Activated B cell treated with CpG ODN at 0.5 μM for 24 hours (primary cell): ENCODE measurements at regions of chr3 and their contacts with region 1.

Region 1: DNA sequence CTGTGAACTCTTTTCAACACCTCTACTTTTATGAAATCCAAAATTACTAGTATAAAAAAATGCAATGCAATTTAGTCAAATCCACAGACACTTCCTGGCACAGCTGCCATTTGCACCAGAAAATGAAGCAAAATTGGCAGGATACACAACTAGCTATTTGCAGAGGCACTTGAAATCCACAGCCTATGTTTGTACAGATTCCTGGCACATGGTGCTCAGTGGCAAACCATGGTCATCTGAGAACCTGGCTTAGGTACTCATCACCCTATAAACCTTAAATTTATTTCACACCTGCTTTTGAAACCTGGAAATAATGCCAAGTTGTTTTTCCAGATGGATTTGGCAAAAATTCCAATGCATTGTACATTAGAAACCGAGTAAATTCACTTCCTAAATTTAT is 20.2 kb upstream of the PPM1L start:
- DNase-seq: no peak
- ATAC-seq: no peak
- H3K4me3 Mint-ChIP-seq: no peak overlapping the region
- H3K27ac Mint-ChIP-seq: no peak overlapping the region
- H3K4me1 Mint-ChIP-seq: no peaks in the 10 kb centered on the region
- H3K27me3 Mint-ChIP-seq: peaks cover 3% of the 10 kb centered on the region
- CTCF ChIP-seq: no peak

Region 2: DNA sequence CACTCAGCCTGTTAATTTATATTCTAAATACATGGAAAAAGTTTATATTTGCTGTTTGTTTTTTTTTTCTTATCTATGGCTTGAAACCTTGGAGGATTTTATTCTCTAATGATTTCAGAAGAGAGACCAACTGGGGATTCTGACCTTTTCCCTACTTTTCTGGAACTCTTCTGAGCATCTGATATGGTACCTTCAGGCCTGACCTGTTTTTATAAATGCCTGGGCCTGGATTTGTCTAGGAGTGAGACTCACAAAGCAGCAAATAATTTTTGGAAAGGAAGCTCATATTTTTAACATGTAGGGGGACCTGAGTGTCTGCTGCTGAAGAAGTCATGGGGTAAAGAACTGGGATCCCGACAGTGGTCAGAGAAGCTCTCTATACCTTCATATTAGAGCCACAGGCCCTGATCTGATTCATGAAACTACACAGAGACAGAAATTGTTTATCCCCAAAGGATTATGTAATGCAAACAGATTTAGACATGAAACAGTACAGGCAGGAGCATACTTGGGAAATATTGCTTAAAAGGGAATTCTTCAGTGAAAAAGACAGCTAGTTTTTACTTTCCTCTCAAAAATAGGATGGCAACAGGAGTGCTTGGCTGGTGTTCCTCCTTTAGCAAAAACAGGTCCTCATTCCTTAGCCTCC is 36.1 kb after region 1 on chr3:
- CTCF ChIA-PET with region 1: no interaction called
- POLR2A ChIA-PET with region 1: no interaction called
- intact Hi-C with region 1: loop called (anchors 2 kb)
- DNase-seq: no peak
- ATAC-seq: no peak
- H3K4me3 Mint-ChIP-seq: no peak overlapping the region
- H3K27ac Mint-ChIP-seq: no peak overlapping the region
- H3K4me1 Mint-ChIP-seq: no peaks in the 10 kb centered on the region
- H3K27me3 Mint-ChIP-seq: peaks cover 8% of the 10 kb centered on the region
- CTCF ChIP-seq: no peak